ENCODE measurements at regions of chr2 and their contacts with region 1.

Region 1: DNA sequence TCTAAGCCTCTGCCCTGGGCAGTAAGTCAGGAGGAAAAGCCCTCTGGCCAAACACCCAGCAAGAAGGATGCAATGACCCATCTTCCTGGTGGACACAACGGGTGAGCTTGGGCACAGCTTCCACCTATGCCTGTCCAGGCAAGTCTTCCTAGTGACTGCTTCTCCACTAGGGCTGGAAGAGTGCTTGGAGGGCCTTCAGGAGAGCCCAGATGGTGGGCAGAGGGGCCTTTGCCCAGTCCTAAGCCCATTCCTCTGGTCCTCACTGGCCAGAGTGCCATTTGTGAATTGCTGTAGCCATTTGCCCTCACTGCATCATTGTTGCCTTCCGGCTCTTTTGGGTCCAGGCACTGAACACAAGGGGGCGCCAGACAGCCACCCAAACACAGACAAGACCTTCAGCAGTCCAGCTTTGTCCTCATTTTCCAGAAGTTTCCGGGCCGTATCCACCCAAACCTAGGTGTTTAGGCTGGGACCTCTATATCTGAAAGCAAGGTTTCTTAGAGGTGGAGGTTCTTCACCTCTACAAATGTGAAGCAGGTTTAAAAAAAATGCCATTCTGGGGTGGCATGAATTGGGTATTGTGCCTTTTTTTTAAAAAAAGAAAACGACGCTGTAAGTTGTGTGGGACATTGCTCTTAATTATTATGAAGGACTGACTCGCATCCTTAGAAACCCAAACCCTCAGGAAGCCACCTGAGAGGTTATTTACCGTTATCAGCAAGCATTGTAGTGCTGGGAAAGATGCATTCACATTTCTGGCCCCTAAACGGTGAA is 29.5 kb downstream of the PAX8 start:
- DNase-seq: peak in 1 of 2 experiments; percentile 73
- H3K4me3 ChIP-seq: no peak overlapping the region
- H3K27ac ChIP-seq: no peak overlapping the region
- H3K4me1 ChIP-seq: 0 out of 2 replicates have a peak, but pooled peaks cover 4% of the 10 kb centered on the region
- H3K27me3 ChIP-seq: no peaks in the 10 kb centered on the region
- CTCF ChIP-seq: peak; percentile 97

Region 2: GRCh38 chr2:113203901-113204519 is 45.2 kb before region 1 on chr2:
- CTCF ChIA-PET with region 1: interaction called, 3 read pairs
- POLR2A ChIA-PET with region 1: no interaction called
- intact Hi-C with region 1: loop called (anchors 1 kb)
- DNase-seq: peak; percentile 64 to 79
- H3K4me3 ChIP-seq: no peak overlapping the region
- H3K27ac ChIP-seq: no peak overlapping the region
- H3K4me1 ChIP-seq: peaks cover 6% of the 10 kb centered on the region; the same call in 1 of the 2 replicates
- H3K27me3 ChIP-seq: no peaks in the 10 kb centered on the region
- CTCF ChIP-seq: peak; percentile 94

Region 3: DNA sequence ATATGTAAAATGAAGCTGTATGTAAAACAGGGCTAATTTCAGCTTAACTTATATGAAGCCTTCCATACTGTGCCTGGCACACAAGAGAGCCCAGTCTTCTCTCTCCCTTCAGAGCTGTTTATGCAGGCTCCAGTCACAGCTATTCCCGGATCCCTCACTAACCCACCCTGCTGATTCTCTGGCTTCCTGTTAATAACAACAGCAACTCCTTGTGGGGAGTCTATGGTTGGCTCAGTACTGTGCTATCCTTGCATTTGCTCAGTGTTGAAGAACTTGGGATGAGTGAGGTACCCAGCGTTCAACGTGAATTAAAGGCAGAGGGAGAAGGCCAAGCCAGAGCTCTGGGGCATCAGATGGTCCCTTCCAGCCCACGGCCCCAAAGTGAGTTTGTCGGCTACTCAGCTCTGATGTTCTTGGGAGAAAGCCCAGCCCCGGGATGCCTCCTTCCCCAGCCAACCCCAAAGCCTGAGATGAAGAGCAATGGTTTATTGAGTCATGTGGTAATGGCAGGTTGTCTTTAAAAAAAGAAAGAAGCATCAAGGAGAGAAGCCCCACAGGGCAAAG is 32.2 kb before region 1 on chr2:
- CTCF ChIA-PET with region 1: no interaction called
- POLR2A ChIA-PET with region 1: interaction called, 19 read pairs
- intact Hi-C with region 1: no loop called
- DNase-seq: no peak
- H3K4me3 ChIP-seq: no peak overlapping the region
- H3K27ac ChIP-seq: no peak overlapping the region
- H3K4me1 ChIP-seq: peaks cover 2% of the 10 kb centered on the region
- H3K27me3 ChIP-seq: no peaks in the 10 kb centered on the region
- CTCF ChIP-seq: no peak

Region 4: DNA sequence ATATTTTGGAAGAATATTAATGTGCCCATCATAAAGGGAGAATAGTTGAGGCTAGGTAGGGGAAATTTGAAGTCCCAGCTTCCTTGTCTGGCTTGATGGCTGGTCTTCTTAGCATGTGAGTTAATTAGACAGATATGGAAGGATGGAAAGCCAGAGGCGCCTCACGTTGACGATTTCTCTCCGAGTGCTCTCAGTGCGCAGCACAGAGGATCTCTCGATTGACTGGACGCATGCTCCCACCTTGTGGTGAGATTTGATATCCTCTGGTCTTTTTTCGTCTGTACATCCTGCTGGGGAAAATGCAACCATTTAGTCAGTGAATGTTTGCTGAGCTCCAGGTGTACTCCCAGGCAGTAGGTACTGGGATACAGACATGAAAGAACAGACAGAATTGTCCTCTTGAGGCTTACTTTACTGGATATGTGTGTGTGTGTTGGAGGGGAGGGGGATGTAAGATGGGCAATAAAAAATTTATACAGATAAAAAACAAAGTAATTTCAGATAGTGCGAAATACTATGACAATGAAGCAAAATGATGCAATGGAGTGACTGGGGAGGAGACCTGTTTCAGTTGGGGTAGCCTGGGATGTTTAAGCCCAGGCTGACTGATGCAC is 121.4 kb after region 1 on chr2:
- CTCF ChIA-PET with region 1: interaction called, 4 read pairs
- POLR2A ChIA-PET with region 1: no interaction called
- intact Hi-C with region 1: loop called (anchors 1 kb)
- DNase-seq: peak; percentile 69 to 73
- H3K4me3 ChIP-seq: no peak overlapping the region
- H3K27ac ChIP-seq: no peak overlapping the region
- H3K4me1 ChIP-seq: peaks cover 12% of the 10 kb centered on the region
- H3K27me3 ChIP-seq: no peaks in the 10 kb centered on the region
- CTCF ChIP-seq: peak; percentile 75

Measured in PC-9 (cell line).